ENCODE measurements at regions of chr17 and their contacts with region 1.

Region 1: DNA sequence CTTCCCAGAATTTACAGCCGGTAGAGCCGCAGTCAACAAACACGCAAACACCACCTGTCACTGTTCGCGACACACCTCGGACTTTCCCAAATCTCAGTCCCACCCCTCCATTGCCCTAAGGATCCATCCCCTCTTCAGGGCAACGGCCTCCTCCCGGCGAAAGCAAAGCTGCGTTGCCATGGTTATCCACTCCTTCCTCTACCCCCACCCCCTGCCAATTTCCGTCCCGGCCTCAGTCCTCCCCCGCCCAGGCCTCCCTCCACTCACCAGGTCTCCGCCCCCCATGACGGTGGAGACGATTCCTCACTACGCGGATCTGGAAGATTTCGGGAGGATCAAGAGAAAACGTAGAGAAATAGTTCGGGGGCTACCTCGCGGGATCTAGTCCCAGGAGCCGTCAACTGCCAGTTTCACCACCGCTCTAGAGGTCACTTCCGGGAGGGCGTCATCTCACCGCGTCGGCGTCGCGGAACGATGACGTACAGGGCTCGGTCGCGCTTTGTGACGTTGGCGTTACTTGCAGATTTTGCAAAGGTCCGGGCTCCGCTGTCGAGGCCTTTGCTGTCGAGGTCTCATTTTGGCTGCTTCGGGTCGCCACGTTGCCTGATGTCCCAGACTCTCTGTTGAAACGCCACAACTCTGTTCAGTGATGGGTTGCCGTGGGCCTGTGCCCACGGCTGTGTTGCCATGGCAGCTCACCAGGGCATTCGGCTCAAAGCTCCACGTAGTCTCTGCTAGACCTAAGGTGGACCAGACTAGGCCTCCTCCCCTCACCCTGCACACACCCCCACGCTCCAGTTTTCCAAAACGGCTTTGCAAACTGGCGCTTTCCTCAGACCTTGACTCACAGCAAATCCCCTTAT is at the start of gene CWC25:
- DNase-seq: peak; percentile 100
- H3K4me3 ChIP-seq: peak within 1 kb of the TSS; percentile 65 to 92 (median 76)
- H3K27ac ChIP-seq: peak within 1 kb of the TSS; percentile 96 to 99 (median 97)
- H3K4me1 ChIP-seq: peaks cover 18 to 42% (median 28%) of the 10 kb centered on the region in 4 donors
- H3K27me3 ChIP-seq: no peaks in the 10 kb centered on the region
- CTCF ChIP-seq: peak in 1 of 3 experiments; percentile 26
- EP300 ChIP-seq: no peak
- POLR2A ChIP-seq: peak; percentile 87
- total RNA-seq, gene CWC25: 16.5 to 27.8 (median 19.6) TPM

Region 2: GRCh38 chr17:38853292-38854219 is 28.4 kb after region 1 on chr17 and contains the start of gene RPL23:
- intact Hi-C with region 1: loop called (anchors 2 kb)
- DNase-seq: peak; percentile 99
- H3K4me3 ChIP-seq: peak within 1 kb of the TSS; percentile 56 to 65 (median 60)
- H3K27ac ChIP-seq: peak within 1 kb of the TSS; percentile 90 to 95 (median 92)
- H3K4me1 ChIP-seq: peaks cover 16 to 34% (median 32%) of the 10 kb centered on the region in 4 donors
- H3K27me3 ChIP-seq: no peaks in the 10 kb centered on the region
- CTCF ChIP-seq: no peak
- EP300 ChIP-seq: no peak
- POLR2A ChIP-seq: peak; percentile 68
- total RNA-seq, gene RPL23: 721 to 1,711 (median 1,283) TPM

Region 3: DNA sequence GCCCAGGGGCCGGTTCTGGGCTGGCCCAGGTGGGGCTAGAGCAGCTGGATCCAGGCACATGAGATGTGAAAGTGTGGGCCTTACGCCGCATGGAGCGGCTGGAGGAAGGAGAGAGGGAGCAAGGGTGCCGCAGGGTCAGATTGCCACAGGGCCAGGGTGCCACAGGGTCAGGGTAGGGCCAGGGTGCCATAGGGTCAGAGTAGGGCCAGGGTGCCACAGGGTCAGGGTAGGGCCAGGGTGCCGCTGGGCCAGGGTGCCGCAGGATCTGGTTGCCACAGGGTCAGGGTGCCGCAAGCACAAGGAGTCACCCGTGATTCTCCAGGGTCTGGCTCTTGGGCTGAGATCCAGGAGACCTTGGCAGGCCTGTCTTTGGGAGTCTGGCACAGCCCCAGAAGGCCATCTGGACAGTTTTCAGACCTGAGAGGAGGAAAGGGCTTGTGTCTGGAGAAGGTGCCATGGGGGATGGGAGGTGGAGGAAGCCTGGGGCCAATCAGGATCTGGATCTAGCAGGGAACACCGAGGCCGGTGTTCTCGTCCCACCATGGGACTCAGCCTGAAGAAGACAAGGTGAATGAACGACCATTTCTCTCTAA is 87.2 kb after region 1 on chr17:
- intact Hi-C with region 1: no loop called
- DNase-seq: no peak
- H3K4me3 ChIP-seq: no peak overlapping the region
- H3K27ac ChIP-seq: peak overlapping the region; percentile 28 to 69 (median 60)
- H3K4me1 ChIP-seq: peaks cover 41 to 71% (median 55%) of the 10 kb centered on the region in 4 donors
- H3K27me3 ChIP-seq: no peaks in the 10 kb centered on the region
- CTCF ChIP-seq: no peak
- EP300 ChIP-seq: no peak
- POLR2A ChIP-seq: no peak

Measured in esophagus muscularis mucosa (tissue), 4 donors.